ENCODE measurements at regions of chr1 and their contacts with region 1.

Region 1: GRCh38 chr1:41802532-41803501 is 115.9 kb downstream of the HIVEP3 start:
- DNase-seq: no peak
- H3K4me3 Mint-ChIP-seq: no peak overlapping the region
- H3K27ac Mint-ChIP-seq: peak overlapping the region; percentile 79
- H3K4me1 Mint-ChIP-seq: peaks cover 83% of the 10 kb centered on the region
- H3K27me3 Mint-ChIP-seq: no peaks in the 10 kb centered on the region

Region 2: DNA sequence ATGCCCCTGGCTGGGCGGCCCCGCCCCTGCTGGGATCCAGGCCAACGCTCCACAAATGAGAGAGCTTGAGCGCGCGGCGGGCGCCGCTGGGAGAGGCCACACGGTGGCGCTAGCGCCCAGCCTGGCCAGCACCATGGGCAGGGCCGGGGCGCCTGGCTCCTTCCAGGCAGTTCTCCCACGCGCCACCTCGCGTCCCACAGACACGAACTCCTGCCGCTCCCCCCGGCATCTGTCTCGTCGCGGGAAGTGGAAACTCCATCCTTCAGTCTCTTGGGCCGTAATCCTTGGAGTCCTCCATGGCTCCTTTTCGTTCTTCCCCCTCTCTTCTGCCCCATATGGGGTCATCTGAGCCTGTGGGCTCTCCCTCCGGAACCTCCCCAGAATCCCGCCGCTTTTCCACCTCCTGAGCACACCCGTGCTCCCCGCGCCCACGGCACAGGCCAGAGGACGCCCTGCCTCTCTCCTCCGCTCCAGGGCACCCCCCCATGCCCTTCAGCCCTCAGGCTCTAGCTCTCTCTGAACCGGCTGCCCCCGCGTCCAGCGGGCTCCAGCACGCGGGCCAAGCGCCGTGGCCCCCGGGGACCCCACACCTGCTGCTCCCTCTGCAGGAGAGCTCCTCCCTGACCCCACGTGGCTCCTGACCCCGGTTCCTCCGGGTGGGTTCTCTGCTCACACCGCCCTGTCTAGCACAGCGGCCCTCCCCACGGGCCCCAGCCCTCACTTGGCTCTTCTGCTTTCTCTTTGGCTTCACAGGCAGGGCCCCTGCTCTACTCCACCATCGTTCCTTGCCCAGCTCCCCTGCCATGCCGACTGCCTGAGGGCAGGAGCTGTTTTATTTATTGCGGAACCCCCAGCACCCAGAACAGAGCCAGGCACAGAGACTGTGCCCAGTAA is 286.4 kb before region 1 on chr1:
- CTCF ChIA-PET with region 1: no interaction called
- POLR2A ChIA-PET with region 1: no interaction called
- intact Hi-C with region 1: loop called (anchors 10 kb)
- DNase-seq: peak; percentile 78
- H3K4me3 Mint-ChIP-seq: no peak overlapping the region
- H3K27ac Mint-ChIP-seq: peak overlapping the region; percentile 20
- H3K4me1 Mint-ChIP-seq: peaks cover 6% of the 10 kb centered on the region
- H3K27me3 Mint-ChIP-seq: no peaks in the 10 kb centered on the region

Region 3: DNA sequence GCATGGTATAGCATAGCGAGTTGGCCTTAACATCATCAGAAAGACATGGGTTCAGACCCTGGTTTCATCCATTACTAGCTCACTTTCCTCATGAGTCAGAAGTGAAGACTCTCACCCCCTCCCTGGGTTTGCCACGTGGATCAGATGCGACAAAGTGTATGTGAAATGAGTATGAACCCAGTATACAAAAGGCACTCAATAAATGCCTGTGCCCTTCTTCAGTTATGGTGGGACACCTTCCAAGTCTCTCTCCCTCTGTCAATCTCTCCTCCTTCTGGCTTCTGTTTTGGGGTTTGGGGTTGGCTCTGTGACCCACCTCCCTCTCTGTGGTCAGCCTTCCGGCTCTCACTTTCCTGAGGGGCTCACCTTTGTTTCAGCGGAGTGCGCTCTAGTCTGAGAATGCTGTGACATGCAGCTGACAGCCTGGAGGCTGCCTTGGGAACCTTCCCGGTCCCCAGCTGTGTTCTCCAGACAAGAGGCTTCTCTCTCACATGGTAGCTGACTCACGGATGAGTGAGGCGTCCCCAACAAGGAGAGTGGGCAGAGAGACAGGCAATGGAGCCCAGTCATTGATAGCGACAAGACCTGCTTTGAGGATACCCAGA is 163.4 kb before region 1 on chr1:
- CTCF ChIA-PET with region 1: interaction called, 3 read pairs
- POLR2A ChIA-PET with region 1: no interaction called
- intact Hi-C with region 1: loop called (anchors 5 kb)
- DNase-seq: peak; percentile 87
- H3K4me3 Mint-ChIP-seq: peak overlapping the region; percentile 59
- H3K27ac Mint-ChIP-seq: no peak overlapping the region
- H3K4me1 Mint-ChIP-seq: peaks cover 12% of the 10 kb centered on the region
- H3K27me3 Mint-ChIP-seq: no peaks in the 10 kb centered on the region

Region 4: DNA sequence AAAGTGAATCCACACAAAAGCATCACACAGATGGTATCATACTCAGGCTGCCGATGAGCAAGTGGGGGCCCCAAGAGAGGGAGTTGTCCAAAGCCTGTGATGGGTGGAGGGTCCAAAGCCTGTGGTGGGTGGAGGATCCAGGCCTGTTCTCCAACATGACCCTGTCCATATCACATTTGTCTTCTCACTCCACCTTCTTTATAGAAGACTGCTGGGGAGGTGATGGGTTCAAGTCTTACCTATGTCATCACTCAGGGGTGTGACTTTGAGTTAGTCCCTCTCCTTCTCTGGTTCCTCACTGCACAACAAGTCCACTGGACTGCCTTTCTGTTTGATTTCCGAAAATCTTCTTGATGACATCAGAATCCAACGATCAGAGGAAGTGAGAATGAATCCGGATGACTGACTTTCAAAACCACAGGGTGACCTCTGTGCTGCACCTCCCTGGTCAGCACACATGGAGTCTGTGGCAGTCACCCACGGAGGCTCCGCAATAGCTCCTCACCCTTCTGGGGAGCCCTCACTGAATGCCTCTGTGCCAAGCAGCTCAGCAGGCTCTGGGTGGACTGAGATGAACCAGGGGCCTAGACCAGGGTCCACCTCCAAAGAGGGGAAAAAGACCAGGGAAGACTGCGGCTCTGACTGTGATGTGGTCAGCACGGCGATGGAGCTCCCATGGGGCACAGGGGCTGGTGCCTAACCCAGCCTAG is 50.9 kb before region 1 on chr1:
- CTCF ChIA-PET with region 1: no interaction called
- POLR2A ChIA-PET with region 1: no interaction called
- intact Hi-C with region 1: loop called (anchors 2 kb)
- DNase-seq: peak; percentile 39
- H3K4me3 Mint-ChIP-seq: peak overlapping the region; percentile 40
- H3K27ac Mint-ChIP-seq: peak overlapping the region; percentile 84
- H3K4me1 Mint-ChIP-seq: peaks cover 71% of the 10 kb centered on the region
- H3K27me3 Mint-ChIP-seq: no peaks in the 10 kb centered on the region

Region 5: DNA sequence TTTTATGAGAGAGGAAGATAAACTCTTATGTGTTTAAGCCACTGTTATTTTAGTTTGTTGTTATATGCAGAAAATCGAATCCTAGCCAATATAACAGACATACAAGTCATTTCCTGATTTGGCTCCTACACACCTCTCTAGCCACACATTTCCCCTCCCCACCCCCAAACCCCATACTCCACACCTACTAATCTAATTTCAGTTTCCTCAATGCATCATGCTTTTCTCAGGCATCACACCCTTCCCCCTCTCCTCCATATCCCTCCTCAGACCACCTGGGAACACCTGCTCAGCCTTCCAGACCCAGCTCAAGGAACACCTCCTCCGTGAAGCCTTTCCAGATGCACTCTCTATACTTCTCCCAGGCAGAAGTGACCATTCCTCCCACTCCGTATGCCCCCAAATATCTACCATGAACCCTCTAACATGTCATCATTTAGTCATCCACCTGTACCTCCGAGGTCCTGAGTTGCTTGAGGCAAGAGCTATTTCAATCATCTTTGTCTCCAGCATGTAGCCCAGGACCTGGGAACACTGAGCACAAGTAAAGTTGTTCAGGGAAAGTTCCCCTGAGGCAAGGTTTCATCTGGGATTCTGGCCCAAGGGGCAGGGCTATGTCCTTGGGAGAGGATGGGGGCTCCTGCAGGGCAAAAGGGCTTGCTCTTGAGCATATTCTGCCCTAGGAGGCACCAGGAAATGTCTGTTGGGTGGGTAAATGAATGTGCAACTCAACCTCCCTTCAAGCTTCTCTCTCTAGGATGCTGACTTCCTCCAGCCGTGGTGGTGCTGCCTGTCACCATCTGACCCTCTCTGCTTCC is 10.9 kb before region 1 on chr1:
- CTCF ChIA-PET with region 1: interaction called, 5 read pairs
- POLR2A ChIA-PET with region 1: interaction called, 3 read pairs
- intact Hi-C with region 1: loop called (anchors 1 kb)
- DNase-seq: peak; percentile 73
- H3K4me3 Mint-ChIP-seq: no peak overlapping the region
- H3K27ac Mint-ChIP-seq: peak overlapping the region; percentile 78
- H3K4me1 Mint-ChIP-seq: peaks cover 51% of the 10 kb centered on the region
- H3K27me3 Mint-ChIP-seq: no peaks in the 10 kb centered on the region

Region 6: DNA sequence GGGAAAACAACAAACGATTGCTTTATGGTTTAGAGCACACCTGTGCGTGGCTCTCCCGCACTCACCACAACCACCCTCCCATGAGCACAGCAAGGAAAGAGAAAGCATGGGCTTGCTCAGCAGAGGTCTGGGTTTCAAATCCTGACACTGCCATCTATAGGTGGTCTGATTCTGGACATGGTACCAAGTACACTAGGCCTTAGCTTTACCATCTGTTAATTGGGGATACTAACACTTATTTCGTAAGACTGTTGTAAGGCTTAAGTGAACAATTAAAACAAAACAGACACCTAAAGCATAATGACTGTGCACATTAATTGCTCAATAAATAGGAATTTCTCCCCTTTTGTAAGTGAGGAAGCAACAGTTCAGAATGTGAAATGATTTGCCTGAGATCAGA is 65.8 kb after region 1 on chr1:
- CTCF ChIA-PET with region 1: no interaction called
- POLR2A ChIA-PET with region 1: no interaction called
- intact Hi-C with region 1: no loop called
- DNase-seq: peak; percentile 60
- H3K4me3 Mint-ChIP-seq: no peak overlapping the region
- H3K27ac Mint-ChIP-seq: no peak overlapping the region
- H3K4me1 Mint-ChIP-seq: peaks cover 28% of the 10 kb centered on the region
- H3K27me3 Mint-ChIP-seq: no peaks in the 10 kb centered on the region

Region 7: DNA sequence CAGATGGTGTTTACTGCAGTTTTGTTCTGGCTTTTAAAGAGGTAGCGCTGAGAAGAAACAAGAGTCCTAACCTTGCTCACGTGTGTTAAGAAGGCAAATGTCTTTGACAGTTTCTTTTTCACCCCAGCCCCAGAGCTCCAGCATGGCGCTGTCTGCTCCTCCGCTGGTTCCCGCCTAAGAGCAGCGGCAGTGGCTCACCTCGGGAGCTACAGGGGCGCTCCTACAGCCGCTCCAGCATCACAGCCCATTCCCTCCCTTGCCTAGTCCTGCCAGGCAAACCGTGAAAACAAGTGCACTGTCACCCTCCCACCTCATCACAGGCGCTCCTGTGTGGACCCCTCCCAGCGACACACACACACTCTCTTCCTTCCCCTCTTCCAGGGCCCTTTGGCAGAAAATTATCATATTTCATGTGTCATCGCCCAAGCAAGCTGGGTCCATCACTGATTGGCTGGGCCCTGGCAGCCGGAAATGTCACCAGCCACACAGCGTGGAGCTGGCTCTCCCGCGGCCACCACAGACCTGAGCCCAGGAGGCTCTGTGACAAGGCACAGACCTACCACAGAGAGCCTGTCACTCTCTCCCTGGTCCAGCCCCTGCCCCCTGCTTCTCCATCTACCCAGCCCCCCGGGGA is 117.1 kb after region 1 on chr1:
- CTCF ChIA-PET with region 1: no interaction called
- POLR2A ChIA-PET with region 1: no interaction called
- intact Hi-C with region 1: loop called (anchors 5 kb)
- DNase-seq: peak; percentile 94
- H3K4me3 Mint-ChIP-seq: peak overlapping the region; percentile 92
- H3K27ac Mint-ChIP-seq: peak overlapping the region; percentile 97
- H3K4me1 Mint-ChIP-seq: peaks cover 59% of the 10 kb centered on the region
- H3K27me3 Mint-ChIP-seq: no peaks in the 10 kb centered on the region